ENCODE measurements at regions of chr5 and their contacts with region 1.

Region 1: DNA sequence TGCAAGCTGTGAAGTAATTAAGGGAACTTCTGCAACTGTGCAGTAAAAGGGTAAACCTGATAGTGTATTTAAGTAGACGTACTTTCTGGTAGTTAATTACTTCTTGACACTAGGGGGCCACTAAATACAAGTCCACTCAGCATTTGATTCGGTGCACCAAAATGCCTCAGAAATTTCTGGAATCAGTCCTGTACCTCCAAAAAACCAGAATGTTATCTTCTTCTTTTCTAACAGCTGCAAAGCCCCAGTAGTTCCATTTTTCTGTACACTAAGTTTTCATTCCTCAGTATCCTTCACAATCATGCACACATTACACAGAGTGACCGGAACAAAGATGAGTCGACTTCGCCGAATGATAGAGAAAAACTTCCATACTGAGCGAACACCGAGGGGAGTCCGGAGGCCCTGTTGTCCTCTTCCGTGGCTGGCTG is 484 bp downstream of the GFM2 start:
- DNase-seq: peak; percentile 75
- H3K27ac ChIP-seq: peak overlapping the region; percentile 94
- CTCF ChIP-seq: peak; percentile 75

Region 2: GRCh38 chr5:75303419-75303818 is 537.0 kb after region 1 on chr5:
- CTCF ChIA-PET with region 1: interaction called, 10 read pairs
- POLR2A ChIA-PET with region 1: no interaction called
- DNase-seq: no peak
- H3K27ac ChIP-seq: no peak overlapping the region
- CTCF ChIP-seq: no peak